MCF 10A (cell line): ENCODE measurements at regions of chr5 and their contacts with region 1.

Region 1: GRCh38 chr5:41346609-41347008 is 133.3 kb upstream of the C6 start:
- DNase-seq: peak; percentile 16
- H3K4me3 Mint-ChIP-seq: no peak overlapping the region
- H3K27ac Mint-ChIP-seq: no peak overlapping the region
- H3K4me1 Mint-ChIP-seq: no peaks in the 10 kb centered on the region
- H3K27me3 Mint-ChIP-seq: peaks cover 13% of the 10 kb centered on the region
- CTCF ChIP-seq: no peak

Region 2: DNA sequence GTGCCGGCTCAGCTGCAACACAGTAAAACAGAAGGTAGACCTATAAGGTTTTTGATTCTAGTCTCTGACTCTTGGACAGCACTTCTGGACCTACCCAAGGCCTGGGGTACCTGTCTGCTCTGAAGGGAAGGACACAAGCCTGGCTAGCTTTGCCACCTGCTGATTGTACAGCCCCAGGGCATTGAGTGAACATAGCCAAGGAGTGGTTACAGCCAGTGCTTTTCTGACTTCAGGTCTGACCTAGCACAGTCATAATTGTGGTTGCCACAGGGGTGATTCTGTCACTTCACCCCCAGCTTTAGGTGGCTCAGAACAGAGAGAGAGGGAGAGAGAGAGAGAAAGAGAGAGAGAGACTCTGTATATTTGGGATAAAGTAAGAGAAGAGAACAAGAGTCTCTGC is 45.4 kb after region 1 on chr5:
- CTCF ChIA-PET with region 1: no interaction called
- POLR2A ChIA-PET with region 1: no interaction called
- intact Hi-C with region 1: no loop called
- DNase-seq: peak; percentile 34
- H3K4me3 Mint-ChIP-seq: no peak overlapping the region
- H3K27ac Mint-ChIP-seq: no peak overlapping the region
- H3K4me1 Mint-ChIP-seq: peaks cover 6% of the 10 kb centered on the region
- H3K27me3 Mint-ChIP-seq: no peaks in the 10 kb centered on the region
- CTCF ChIP-seq: no peak

Region 3: DNA sequence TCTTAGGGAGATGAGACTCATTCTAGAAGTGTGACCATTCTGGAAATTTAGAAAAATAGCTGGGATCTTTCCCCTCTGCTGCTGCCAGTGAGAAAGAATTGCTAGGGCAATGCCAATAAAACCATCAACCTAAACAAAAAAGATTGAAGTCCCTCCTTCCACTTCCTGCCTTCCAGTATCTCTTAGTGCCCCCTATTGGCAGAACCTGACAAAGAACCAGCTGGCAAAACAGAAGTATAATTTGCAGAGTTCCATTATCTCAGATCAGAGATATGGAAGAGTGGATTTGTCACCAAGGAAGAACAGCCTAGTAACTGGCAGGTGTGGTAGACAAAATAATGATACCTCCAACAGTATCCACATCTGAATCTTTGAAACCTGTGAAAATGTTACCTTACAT is 177.6 kb after region 1 on chr5:
- CTCF ChIA-PET with region 1: interaction called, 3 read pairs
- POLR2A ChIA-PET with region 1: no interaction called
- intact Hi-C with region 1: loop called (anchors 2 kb)
- DNase-seq: peak; percentile 24
- H3K4me3 Mint-ChIP-seq: no peak overlapping the region
- H3K27ac Mint-ChIP-seq: no peak overlapping the region
- H3K4me1 Mint-ChIP-seq: peaks cover 13% of the 10 kb centered on the region
- H3K27me3 Mint-ChIP-seq: peaks cover 34% of the 10 kb centered on the region
- CTCF ChIP-seq: no peak

Region 4: DNA sequence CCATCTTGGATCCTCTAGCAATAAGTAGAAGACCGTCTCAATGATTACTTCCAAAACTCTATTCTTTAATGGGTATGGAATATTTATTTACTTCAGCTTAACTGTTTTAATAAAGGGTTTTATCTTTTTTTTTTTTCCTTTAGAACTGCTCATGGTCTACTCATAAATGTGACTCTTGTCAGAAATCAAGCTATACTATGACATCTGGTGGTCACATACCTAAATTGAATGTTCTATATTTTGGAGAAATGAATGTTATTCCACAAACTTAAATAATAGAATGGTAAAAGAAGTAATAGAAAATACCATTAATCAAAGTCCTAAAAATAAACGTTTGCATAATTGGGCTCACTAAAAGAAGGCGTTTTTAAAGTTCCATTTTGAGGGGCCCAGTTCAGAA is 295.0 kb after region 1 on chr5:
- CTCF ChIA-PET with region 1: interaction called, 5 read pairs
- POLR2A ChIA-PET with region 1: no interaction called
- intact Hi-C with region 1: loop called (anchors 1 kb)
- DNase-seq: peak; percentile 9
- H3K4me3 Mint-ChIP-seq: no peak overlapping the region
- H3K27ac Mint-ChIP-seq: no peak overlapping the region
- H3K4me1 Mint-ChIP-seq: no peaks in the 10 kb centered on the region
- H3K27me3 Mint-ChIP-seq: peaks cover 11% of the 10 kb centered on the region
- CTCF ChIP-seq: no peak